ENCODE measurements at regions of chr17 and their contacts with region 1.

Region 1: DNA sequence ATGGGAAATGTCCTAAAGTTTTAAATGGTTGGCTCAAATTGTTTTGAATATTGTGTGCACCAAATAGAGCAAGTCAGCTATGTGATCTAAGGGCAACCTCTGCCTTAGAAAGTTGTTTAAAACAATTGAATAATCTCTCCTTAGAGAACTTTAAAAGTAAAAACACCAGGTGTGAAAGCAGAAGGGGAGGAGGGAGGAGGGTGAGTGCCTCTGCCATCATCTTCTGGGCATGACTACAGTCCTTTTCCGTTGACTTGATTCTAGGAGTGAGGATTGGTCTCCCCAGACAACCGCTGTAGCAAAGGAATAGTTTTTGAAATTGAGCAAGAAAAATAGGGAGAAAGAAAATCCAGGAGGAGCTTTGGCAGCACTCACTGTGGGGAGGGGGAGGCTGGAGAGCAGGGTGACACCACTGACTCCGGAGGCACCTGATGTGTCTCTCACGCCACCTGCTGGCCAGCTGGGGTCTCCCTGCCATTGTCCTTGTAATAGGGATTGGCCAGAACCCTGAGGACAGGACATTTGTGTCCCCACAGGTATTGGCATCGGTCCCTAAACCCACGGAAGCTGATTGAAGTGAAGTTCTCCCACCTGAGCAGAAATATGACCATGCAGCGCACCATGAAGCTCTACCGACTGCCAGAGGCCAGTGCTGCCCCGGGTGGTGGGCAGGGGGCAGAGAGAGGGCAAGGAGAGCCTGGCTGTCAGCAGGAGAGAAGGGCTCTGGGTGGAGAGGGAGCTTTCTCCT is 33.3 kb downstream of the PLCD3 start:
- DNase-seq: peak; percentile 58
- H3K4me3 Mint-ChIP-seq: no peak overlapping the region
- H3K27ac Mint-ChIP-seq: no peak overlapping the region
- H3K4me1 Mint-ChIP-seq: no peaks in the 10 kb centered on the region
- H3K27me3 Mint-ChIP-seq: no peaks in the 10 kb centered on the region

Region 2: DNA sequence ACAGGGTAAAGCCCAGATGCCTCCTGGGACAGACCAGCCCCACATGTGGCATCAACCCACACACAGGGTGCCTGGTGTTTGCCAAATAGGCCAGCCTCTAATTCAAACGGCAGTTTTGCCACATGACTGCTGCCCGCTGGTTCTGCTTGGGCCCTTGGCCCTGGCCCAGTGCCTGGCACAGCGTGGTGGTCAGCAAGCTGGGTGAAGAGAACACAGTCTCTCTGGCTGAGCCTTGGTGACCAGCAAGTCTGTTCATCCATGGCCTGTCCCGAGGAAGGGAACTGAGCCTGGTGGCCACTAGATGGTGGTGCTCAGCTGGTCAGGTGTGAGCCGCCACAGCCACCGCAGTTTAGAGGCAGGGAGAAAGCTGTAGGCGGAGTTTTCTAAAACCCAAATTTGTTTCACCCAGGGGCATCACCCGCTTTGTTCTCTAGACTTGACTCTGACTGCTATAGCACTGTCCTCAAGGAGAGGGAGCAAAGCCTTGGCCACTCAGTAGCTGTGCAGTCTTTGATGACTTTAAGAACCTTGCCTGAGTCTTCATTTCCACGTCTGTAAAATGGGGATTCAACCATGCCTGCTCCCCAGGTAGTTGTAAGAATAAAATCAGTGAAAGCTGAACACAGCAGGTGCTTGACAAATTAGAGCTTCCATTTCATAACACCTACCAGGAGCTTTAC is 179.0 kb before region 1 on chr17:
- intact Hi-C with region 1: loop called (anchors 1 kb)
- DNase-seq: peak; percentile 50
- H3K4me3 Mint-ChIP-seq: no peak overlapping the region
- H3K27ac Mint-ChIP-seq: no peak overlapping the region
- H3K4me1 Mint-ChIP-seq: peaks cover 8% of the 10 kb centered on the region
- H3K27me3 Mint-ChIP-seq: peaks cover 25% of the 10 kb centered on the region

Region 3: DNA sequence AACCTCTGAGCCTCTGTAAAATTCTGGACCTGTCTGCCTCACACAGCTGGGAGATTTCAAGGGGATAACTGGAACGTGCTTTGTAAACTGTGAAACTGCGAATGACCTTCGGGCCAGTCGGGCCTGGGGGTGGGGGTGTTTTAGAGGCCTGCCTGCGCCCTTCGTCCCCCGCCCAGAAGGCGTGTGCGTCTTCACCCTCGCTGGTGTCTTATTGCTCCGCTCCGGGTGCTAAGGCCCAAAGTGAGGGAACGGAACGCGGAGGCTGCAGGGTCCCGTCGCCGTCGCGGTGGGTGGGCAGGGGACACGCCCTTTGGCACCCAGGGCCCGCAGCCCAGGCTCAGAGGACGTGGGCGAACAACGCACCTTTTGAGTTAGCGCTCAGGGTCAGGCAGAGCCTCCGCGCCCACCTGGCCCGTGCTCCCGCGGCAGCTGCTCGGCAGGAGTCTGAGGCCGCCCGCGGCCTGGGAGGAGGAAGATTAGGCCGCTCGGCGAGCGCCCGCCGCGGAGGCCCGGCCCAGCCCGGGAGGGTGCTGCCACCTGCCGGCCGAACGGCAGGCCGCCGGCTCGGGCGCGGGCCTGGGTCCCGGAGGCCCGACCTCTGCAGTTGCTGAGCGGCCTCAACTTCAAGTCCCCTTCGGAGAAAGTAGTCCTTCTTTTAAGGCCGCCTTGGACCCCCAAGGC is 77.3 kb before region 1 on chr17:
- intact Hi-C with region 1: loop called (anchors 2 kb)
- DNase-seq: peak; percentile 62
- H3K4me3 Mint-ChIP-seq: no peak overlapping the region
- H3K27ac Mint-ChIP-seq: no peak overlapping the region
- H3K4me1 Mint-ChIP-seq: peaks cover 22% of the 10 kb centered on the region
- H3K27me3 Mint-ChIP-seq: peaks cover 30% of the 10 kb centered on the region

Measured in activated T-helper 1 cell treated with anti-CD3 and anti-CD28 coated beads, Interleukin-12 subunit alpha, Interleukin-12 subunit beta, Interleukin-2, Interleukin-4 antibody, amounts not matched to agents 30 ng/mL and 10 ng/mL and 1 ng/mL, durations not matched to agents 14 hours and 24 hours and 36 hours (primary cell).